WTC11 (cell line): ENCODE measurements at regions of chr12 and their contacts with region 1.

Region 1: GRCh38 chr12:120469450-120470149 is at the start of gene SRSF9:
- DNase-seq: peak; percentile 95
- ATAC-seq: peak; percentile 86
- H3K4me3 Mint-ChIP-seq: peak within 1 kb of the TSS; percentile 87
- H3K27ac Mint-ChIP-seq: peak within 1 kb of the TSS; percentile 92
- H3K4me1 Mint-ChIP-seq: peaks cover 30% of the 10 kb centered on the region
- H3K27me3 Mint-ChIP-seq: no peaks in the 10 kb centered on the region
- CTCF ChIP-seq: peak; percentile 35
- total RNA-seq, gene SRSF9: 274 to 286 TPM (median 276 TPM) in 3 replicates

Region 2: GRCh38 chr12:120317224-120318105 is 152.1 kb before region 1 on chr12:
- CTCF ChIA-PET with region 1: interaction called, 12 read pairs
- POLR2A ChIA-PET with region 1: no interaction called
- DNase-seq: peak; percentile 100
- ATAC-seq: peak; percentile 98
- H3K4me3 Mint-ChIP-seq: peak overlapping the region; percentile 80
- H3K27ac Mint-ChIP-seq: peak overlapping the region; percentile 68
- H3K4me1 Mint-ChIP-seq: peaks cover 11% of the 10 kb centered on the region
- H3K27me3 Mint-ChIP-seq: peaks cover 5% of the 10 kb centered on the region
- CTCF ChIP-seq: no peak

Region 3: GRCh38 chr12:120429368-120429767 is 40.2 kb before region 1 on chr12:
- CTCF ChIA-PET with region 1: interaction called, 12 read pairs
- POLR2A ChIA-PET with region 1: no interaction called
- DNase-seq: no peak
- ATAC-seq: no peak
- H3K4me3 Mint-ChIP-seq: no peak overlapping the region
- H3K27ac Mint-ChIP-seq: no peak overlapping the region
- H3K4me1 Mint-ChIP-seq: peaks cover 8% of the 10 kb centered on the region
- H3K27me3 Mint-ChIP-seq: no peaks in the 10 kb centered on the region
- CTCF ChIP-seq: no peak

Region 4: DNA sequence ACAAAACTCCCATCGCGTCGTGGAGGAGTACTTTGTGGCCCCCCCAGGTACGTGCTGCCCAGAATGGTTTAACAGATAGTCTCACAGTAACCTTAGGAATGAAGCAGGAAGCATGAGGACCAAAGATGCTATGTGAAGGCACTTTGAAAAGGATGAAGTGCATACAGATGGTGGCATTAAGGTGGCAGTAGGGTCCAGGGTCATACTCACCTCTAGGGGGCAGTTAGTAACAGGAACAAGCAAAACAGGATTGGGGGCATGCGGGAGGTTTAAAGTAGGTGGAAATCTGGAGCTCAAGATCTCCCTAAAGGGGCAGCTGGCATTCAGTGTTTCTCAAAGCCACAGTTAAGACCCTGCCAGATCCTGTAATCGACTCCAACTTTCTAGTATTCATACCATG is 12.5 kb before region 1 on chr12:
- CTCF ChIA-PET with region 1: interaction called, 44 read pairs
- POLR2A ChIA-PET with region 1: interaction called, 6 read pairs
- DNase-seq: peak; percentile 30
- ATAC-seq: peak; percentile 77
- H3K4me3 Mint-ChIP-seq: no peak overlapping the region
- H3K27ac Mint-ChIP-seq: no peak overlapping the region
- H3K4me1 Mint-ChIP-seq: no peaks in the 10 kb centered on the region
- H3K27me3 Mint-ChIP-seq: no peaks in the 10 kb centered on the region
- CTCF ChIP-seq: 0 out of 2 replicates have a peak, but pooled peaks have one; percentile 15

Region 5: GRCh38 chr12:120495723-120496412 is 26.3 kb after region 1 on chr12 and contains the start of gene DYNLL1:
- CTCF ChIA-PET with region 1: interaction called, 22 read pairs
- POLR2A ChIA-PET with region 1: interaction called, 9 read pairs
- DNase-seq: peak; percentile 99
- ATAC-seq: peak; percentile 97
- H3K4me3 Mint-ChIP-seq: peak within 1 kb of the TSS; percentile 93
- H3K27ac Mint-ChIP-seq: peak within 1 kb of the TSS; percentile 98
- H3K4me1 Mint-ChIP-seq: peaks cover 33% of the 10 kb centered on the region
- H3K27me3 Mint-ChIP-seq: no peaks in the 10 kb centered on the region
- CTCF ChIP-seq: no peak
- total RNA-seq, gene DYNLL1: 327 to 470 TPM (median 463 TPM) in 3 replicates